ENCODE measurements at regions of chr17 and their contacts with region 1.

Region 1: DNA sequence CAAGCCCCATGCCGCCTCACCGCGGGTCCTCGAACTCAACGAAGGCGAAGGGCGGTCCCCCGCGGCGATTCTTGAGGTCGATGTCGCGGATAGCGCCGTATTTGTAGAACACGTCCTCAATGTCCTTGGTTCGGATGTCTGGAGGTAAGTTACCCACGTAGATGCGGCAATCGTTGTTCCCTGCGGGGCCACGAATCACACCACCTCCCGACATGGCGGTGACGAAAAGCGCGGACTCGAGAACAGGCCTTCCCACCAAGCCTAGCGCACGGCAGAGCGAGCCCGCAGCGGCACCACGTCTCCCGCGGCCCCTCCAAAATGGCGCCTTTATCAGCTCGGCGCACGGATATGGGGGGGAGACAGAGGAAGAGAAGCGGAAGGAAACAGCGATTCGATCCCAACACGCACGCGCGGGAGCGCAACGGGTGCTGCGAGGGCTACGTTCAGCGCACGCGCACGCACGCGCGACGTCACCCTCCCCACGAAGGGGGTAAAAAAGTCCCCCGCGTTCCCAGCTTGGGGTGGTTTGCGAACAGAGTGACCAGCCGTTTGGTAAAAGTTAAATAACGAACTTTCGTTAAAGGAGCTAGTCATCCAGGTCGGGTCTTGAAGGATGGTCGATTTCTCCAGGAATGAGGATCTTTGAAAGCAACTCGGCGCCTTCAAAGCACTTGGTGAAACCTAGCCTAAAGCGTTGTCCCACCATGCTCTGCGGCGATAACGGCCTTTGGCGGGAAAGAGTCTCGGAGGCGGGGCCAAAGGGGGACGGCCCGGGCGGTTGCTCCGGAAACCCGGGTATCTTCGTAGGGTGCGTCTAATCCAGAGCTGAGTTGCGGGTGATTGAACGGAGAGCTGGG is at the start of gene SRSF1:
- DNase-seq: peak; percentile 97
- ATAC-seq: peak; percentile 92
- H3K4me3 ChIP-seq: peak within 1 kb of the TSS; percentile 79 to 99 (median 92)
- H3K27ac ChIP-seq: peak within 1 kb of the TSS; percentile 99
- H3K4me1 ChIP-seq: peaks cover 55% of the 10 kb centered on the region
- H3K27me3 ChIP-seq: no peaks in the 10 kb centered on the region; a peak in 1 of 5 replicates
- CTCF ChIP-seq: no peak
- EP300 ChIP-seq: peak; percentile 16 to 62; a peak in 1 of 4 replicates
- POLR2A ChIP-seq: peak; percentile 97 to 98
- RAD21 ChIP-seq: peak; percentile 44
- total RNA-seq, gene SRSF1: 445 and 520 TPM in 2 replicates

Region 2: GRCh38 chr17:57855391-57856035 is 151.6 kb before region 1 on chr17:
- CTCF ChIA-PET with region 1: no interaction called
- POLR2A ChIA-PET with region 1: interaction called, 173 read pairs
- in situ Hi-C with region 1: no loop called
- intact Hi-C with region 1: no loop called
- DNase-seq: peak; percentile 90
- ATAC-seq: peak; percentile 58
- H3K4me3 ChIP-seq: peak overlapping the region; percentile 8 to 51 (median 20); a peak in 5 of 6 replicates
- H3K27ac ChIP-seq: peak overlapping the region; percentile 77
- H3K4me1 ChIP-seq: peaks cover 92% of the 10 kb centered on the region
- H3K27me3 ChIP-seq: no peaks in the 10 kb centered on the region; a peak in 1 of 5 replicates
- CTCF ChIP-seq: peak; percentile 4; the same call in 1 of the 2 replicates
- EP300 ChIP-seq: peak in 1 of 2 experiments; percentile 92; a peak in 2 of 4 replicates
- POLR2A ChIP-seq: no peak
- RAD21 ChIP-seq: no peak

Region 3: GRCh38 chr17:57875309-57876115 is 131.6 kb before region 1 on chr17:
- CTCF ChIA-PET with region 1: no interaction called
- POLR2A ChIA-PET with region 1: interaction called, 19 read pairs
- in situ Hi-C with region 1: no loop called
- intact Hi-C with region 1: no loop called
- DNase-seq: peak; percentile 93
- ATAC-seq: peak; percentile 85
- H3K4me3 ChIP-seq: peak overlapping the region in 1 of 3 experiments; percentile 15; a peak in 1 of 6 replicates
- H3K27ac ChIP-seq: peak overlapping the region; percentile 64
- H3K4me1 ChIP-seq: peaks cover 68% of the 10 kb centered on the region
- H3K27me3 ChIP-seq: no peaks in the 10 kb centered on the region
- CTCF ChIP-seq: peak; percentile 62
- EP300 ChIP-seq: peak in 1 of 2 experiments; percentile 51; a peak in 1 of 4 replicates
- POLR2A ChIP-seq: no peak
- RAD21 ChIP-seq: peak; percentile 60; the same call in 1 of the 2 replicates

Region 4: DNA sequence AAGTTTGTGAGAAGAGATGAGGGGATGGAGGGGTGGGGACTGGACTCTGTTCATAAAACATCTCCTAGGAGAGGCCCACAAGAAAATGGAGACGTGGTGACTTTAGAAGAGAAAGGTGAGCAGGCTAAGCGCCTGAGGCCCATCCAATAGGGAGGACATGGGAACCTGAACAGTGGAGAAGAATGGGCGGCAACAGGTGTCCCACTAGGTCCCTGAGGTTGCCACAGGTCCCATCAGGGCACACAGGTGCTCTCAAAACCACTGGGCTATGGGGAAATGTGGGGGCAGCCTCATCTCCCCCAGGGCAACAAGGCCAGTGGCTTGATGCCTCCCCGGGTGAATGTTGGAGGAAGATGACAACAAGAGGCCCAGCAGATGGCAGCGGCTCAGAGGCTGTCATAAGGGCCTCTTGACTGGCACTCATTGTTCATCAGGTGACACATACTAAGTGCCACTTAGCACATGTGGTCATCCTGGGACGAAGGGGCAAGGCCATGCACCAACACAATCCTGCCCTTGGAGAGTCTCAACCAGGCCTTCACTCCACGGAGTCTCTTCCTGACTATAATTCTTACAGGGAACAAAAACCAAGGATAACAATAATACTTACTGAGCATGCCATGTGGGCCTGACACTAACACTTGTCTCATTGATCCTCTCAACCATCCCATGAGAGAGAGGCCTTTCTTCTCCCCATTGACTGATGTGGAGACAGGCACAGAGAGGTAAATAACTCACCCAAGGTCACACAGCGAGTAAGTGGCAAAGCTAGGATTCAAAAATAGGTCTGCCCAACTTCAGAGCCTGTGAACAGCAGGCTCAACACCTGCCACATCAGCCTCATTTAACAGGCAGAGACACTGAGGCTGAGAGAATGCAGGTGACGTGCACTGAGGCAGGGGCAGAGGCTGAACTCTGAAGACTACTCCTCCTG is 90.0 kb before region 1 on chr17:
- CTCF ChIA-PET with region 1: no interaction called
- POLR2A ChIA-PET with region 1: no interaction called
- in situ Hi-C with region 1: no loop called
- intact Hi-C with region 1: no loop called
- DNase-seq: peak; percentile 53
- ATAC-seq: peak; percentile 72
- H3K4me3 ChIP-seq: no peak overlapping the region
- H3K27ac ChIP-seq: no peak overlapping the region
- H3K4me1 ChIP-seq: peaks cover 52% of the 10 kb centered on the region
- H3K27me3 ChIP-seq: no peaks in the 10 kb centered on the region
- CTCF ChIP-seq: peak; percentile 73
- EP300 ChIP-seq: no peak
- POLR2A ChIP-seq: no peak
- RAD21 ChIP-seq: peak; percentile 78

Region 5: GRCh38 chr17:57939797-57940196 is 67.4 kb before region 1 on chr17:
- CTCF ChIA-PET with region 1: no interaction called
- POLR2A ChIA-PET with region 1: interaction called, 10 read pairs
- in situ Hi-C with region 1: no loop called
- intact Hi-C with region 1: no loop called
- DNase-seq: no peak
- ATAC-seq: no peak
- H3K4me3 ChIP-seq: no peak overlapping the region
- H3K27ac ChIP-seq: no peak overlapping the region
- H3K4me1 ChIP-seq: peaks cover 74% of the 10 kb centered on the region
- H3K27me3 ChIP-seq: no peaks in the 10 kb centered on the region
- CTCF ChIP-seq: no peak
- EP300 ChIP-seq: no peak
- POLR2A ChIP-seq: no peak
- RAD21 ChIP-seq: no peak

Region 6: GRCh38 chr17:57995076-57995956 is 11.8 kb before region 1 on chr17:
- CTCF ChIA-PET with region 1: no interaction called
- POLR2A ChIA-PET with region 1: interaction called, 64 read pairs
- in situ Hi-C with region 1: no loop called
- intact Hi-C with region 1: no loop called
- DNase-seq: peak; percentile 87
- ATAC-seq: peak; percentile 78
- H3K4me3 ChIP-seq: no peak overlapping the region
- H3K27ac ChIP-seq: peak overlapping the region; percentile 4
- H3K4me1 ChIP-seq: peaks cover 57% of the 10 kb centered on the region
- H3K27me3 ChIP-seq: no peaks in the 10 kb centered on the region
- CTCF ChIP-seq: peak; percentile 93
- EP300 ChIP-seq: no peak
- POLR2A ChIP-seq: peak; percentile 41 to 80; a peak in 2 of 4 replicates
- RAD21 ChIP-seq: peak; percentile 89

Region 7: GRCh38 chr17:58082870-58083490 is 75.8 kb after region 1 on chr17 and contains the start of gene DYNLL2:
- CTCF ChIA-PET with region 1: no interaction called
- POLR2A ChIA-PET with region 1: interaction called, 56 read pairs
- in situ Hi-C with region 1: loop called (anchors 5 kb)
- intact Hi-C with region 1: loop called (anchors 1 kb)
- DNase-seq: peak; percentile 85
- ATAC-seq: peak; percentile 76
- H3K4me3 ChIP-seq: peak within 1 kb of the TSS; percentile 90 to 99 (median 95)
- H3K27ac ChIP-seq: peak within 1 kb of the TSS; percentile 78
- H3K4me1 ChIP-seq: peaks cover 50% of the 10 kb centered on the region
- H3K27me3 ChIP-seq: peaks cover 0 to 14% of the 10 kb centered on the region in 2 experiments; a peak in 3 of 5 replicates
- CTCF ChIP-seq: no peak
- EP300 ChIP-seq: no peak
- POLR2A ChIP-seq: peak; percentile 66 to 76; a peak in 3 of 4 replicates
- RAD21 ChIP-seq: no peak
- total RNA-seq, gene DYNLL2: 29.0 and 34.8 TPM in 2 replicates

Region 8: DNA sequence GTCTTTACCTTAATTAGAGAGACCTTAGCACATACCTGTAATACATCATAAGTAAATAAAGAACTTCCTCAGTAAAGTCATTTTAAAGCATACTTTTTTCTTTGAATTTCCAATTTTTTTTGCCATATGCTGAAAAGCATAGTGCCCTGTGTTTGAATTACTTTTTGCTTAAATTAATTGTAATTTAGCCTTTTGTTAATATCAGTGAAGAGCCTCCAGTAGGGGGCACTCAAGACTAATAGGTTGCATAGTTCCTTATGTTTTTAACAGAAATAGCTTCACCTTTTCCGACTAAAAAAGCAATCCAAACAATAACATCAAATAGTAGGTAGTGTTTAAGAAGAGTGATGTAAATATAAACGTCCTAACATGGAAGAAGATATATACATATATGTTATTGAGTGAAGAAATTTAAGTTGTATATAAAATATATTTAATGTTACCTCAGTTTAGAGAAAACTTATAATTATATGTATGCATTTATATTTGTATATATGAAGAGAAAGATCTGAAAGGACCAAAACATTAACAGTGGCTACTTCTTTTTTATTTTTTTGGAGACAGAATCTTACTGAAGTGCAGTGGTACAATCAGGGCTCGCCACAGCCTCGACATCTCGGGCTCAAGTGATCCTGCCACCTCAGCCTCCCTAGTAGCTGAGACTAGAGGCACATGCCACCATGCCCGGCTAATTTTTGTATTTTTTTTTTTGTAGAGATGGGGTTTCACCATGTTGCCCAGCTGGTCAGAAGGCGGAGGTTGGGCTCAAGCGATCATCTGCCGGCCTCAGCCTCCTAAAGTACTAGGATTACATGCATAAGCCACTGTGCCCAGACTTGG is 704.0 kb after region 1 on chr17:
- CTCF ChIA-PET with region 1: no interaction called
- POLR2A ChIA-PET with region 1: no interaction called
- in situ Hi-C with region 1: no loop called
- intact Hi-C with region 1: no loop called
- DNase-seq: peak; percentile 56
- ATAC-seq: no peak
- H3K4me3 ChIP-seq: no peak overlapping the region
- H3K27ac ChIP-seq: no peak overlapping the region
- H3K4me1 ChIP-seq: no peaks in the 10 kb centered on the region
- H3K27me3 ChIP-seq: no peaks in the 10 kb centered on the region
- CTCF ChIP-seq: peak; percentile 68
- EP300 ChIP-seq: no peak
- POLR2A ChIP-seq: no peak
- RAD21 ChIP-seq: peak; percentile 66; the same call in 1 of the 2 replicates

Measured in HepG2 (cell line).